PC-3 (cell line): ENCODE measurements at regions of chr7 and their contacts with region 1.

Region 1: DNA sequence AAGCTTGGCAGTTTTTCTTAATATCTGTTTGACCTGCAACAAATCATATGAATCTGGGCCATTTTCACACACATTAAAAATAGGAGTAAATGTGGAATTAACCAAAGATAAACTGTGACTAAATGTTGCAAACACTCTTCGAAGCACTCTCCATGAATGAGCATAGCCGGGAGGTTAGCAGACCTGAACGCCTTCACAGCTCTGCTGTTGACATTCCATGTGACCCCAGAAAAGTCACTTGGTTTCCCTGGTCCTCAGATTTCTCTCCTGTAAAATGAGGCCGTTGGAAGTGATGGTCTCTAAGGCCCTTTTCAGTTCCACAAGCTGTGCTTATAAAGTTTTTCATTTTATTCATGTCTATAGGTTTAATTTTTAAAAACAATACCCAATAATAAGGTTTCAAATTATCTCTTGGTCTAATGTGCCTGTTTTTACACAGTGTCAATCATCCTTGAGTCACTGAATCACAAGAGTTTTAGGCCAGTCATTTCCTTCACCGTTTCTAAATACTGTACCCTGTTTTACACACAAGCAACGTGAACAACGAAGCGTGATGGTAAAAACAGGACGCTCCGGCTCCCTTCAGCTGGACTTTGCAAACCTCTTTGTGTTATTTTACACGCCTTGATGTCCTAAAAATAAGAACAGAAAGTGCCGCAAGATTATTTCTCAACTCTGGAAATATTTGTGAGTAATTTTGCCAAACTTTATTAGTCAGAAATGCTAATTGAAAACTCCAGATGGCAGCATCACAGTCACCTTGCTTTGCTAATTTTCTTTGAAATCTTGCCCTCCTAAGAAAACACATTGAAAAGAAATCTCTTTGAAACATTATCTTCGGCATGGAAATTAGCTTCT is 38.6 kb upstream of the MET start:
- DNase-seq: peak; percentile 13
- ATAC-seq: peak; percentile 53
- H3K4me3 ChIP-seq: peak overlapping the region; percentile 39; the same call in 1 of the 2 replicates
- H3K27ac ChIP-seq: peak overlapping the region; percentile 17; the same call in 1 of the 2 replicates
- H3K4me1 ChIP-seq: peaks cover 36% of the 10 kb centered on the region
- H3K27me3 ChIP-seq: no peaks in the 10 kb centered on the region
- CTCF ChIP-seq: peak; percentile 34; the same call in 1 of the 2 replicates

Region 2: GRCh38 chr7:116122972-116123595 is 510.3 kb before region 1 on chr7:
- CTCF ChIA-PET with region 1: no interaction called
- POLR2A ChIA-PET with region 1: no interaction called
- intact Hi-C with region 1: no loop called
- DNase-seq: peak; percentile 55
- ATAC-seq: peak; percentile 20; the same call in 1 of the 2 replicates
- H3K4me3 ChIP-seq: no peak overlapping the region
- H3K27ac ChIP-seq: no peak overlapping the region
- H3K4me1 ChIP-seq: no peaks in the 10 kb centered on the region
- H3K27me3 ChIP-seq: peaks cover 18% of the 10 kb centered on the region; the same call in 1 of the 2 replicates
- CTCF ChIP-seq: peak; percentile 88

Region 3: DNA sequence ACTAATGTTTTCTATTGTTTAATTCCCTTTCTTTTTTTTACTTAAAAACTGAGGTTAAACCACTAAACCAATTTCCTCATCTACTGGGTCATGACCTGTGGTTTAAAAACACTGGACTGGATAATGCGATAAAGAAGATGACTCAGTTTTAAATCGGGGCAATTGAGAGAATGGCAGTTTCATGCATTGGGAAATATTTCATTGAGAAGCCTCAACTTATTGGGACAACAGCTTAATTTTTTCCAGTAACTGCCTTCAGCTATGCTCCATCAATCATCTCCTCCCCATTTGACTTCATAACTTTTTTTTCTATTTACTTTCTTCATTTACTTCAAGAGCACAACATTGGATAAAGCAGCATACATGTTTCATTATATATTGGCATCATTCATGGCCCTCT is 23.1 kb before region 1 on chr7:
- CTCF ChIA-PET with region 1: no interaction called
- POLR2A ChIA-PET with region 1: no interaction called
- intact Hi-C with region 1: no loop called
- DNase-seq: peak; percentile 22
- ATAC-seq: no peak
- H3K4me3 ChIP-seq: no peak overlapping the region
- H3K27ac ChIP-seq: no peak overlapping the region
- H3K4me1 ChIP-seq: peaks cover 11% of the 10 kb centered on the region; the same call in 1 of the 2 replicates
- H3K27me3 ChIP-seq: no peaks in the 10 kb centered on the region
- CTCF ChIP-seq: no peak

Region 4: GRCh38 chr7:117479225-117480054 is 846.1 kb after region 1 on chr7 and contains the start of gene CFTR:
- CTCF ChIA-PET with region 1: no interaction called
- POLR2A ChIA-PET with region 1: interaction called, 10 read pairs
- intact Hi-C with region 1: no loop called
- DNase-seq: no peak
- ATAC-seq: no peak
- H3K4me3 ChIP-seq: no peak within 1 kb of the TSS
- H3K27ac ChIP-seq: no peak within 1 kb of the TSS
- H3K4me1 ChIP-seq: no peaks in the 10 kb centered on the region
- H3K27me3 ChIP-seq: peaks cover 41% of the 10 kb centered on the region
- CTCF ChIP-seq: no peak
- total RNA-seq, gene CFTR: not detected in 2 replicates